B cell (primary cell): ENCODE measurements at regions of chr2 and their contacts with region 1.

Region 1: GRCh38 chr2:20015472-20016083 is 3.1 kb upstream of the MATN3 start:
- DNase-seq: peak; percentile 63
- ATAC-seq: no peak
- H3K4me3 ChIP-seq: no peak overlapping the region
- H3K4me3 Mint-ChIP-seq: no peak overlapping the region
- H3K27ac ChIP-seq: no peak overlapping the region
- H3K27ac Mint-ChIP-seq: no peak overlapping the region
- H3K4me1 ChIP-seq: peaks cover 11 to 18% of the 10 kb centered on the region in 2 donors
- H3K4me1 Mint-ChIP-seq: peaks cover 11% of the 10 kb centered on the region
- H3K27me3 ChIP-seq: peaks cover 0 to 33% (median 22%) of the 10 kb centered on the region in 4 experiments
- H3K27me3 Mint-ChIP-seq: peaks cover 42% of the 10 kb centered on the region
- CTCF ChIP-seq: peak; percentile 85

Region 2: DNA sequence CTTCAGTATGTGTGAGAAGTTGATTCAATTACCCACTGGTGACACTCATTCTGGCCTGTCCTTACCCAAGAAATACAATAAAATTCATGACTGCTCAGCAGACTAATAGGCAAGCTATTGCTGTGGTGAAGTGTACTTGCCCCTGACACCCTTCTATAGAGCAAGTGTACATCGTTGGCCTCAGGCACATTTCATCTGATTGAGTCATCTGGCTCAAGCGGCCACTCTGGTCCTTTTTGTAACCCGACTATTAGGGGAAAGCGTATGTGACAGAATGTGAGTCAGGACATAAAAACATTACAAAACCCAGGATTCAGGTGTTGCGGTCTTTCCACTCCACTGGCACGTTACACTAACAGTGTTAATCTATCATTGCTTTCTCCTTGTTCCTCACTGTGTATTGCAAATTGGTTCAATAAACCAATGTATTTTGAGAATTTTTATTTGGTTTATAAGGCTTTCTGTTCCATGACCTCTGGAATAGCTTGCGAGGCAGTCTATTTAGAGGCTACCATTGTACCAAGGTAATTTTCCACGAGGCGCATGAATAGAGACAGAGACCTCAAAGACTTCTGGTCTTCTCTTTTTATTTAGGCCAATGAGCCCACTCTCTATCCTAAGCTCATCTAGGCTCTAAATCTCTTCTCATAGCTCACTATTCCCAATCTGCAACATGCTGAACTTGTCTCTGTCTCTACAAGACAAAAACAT is 103.6 kb before region 1 on chr2:
- CTCF ChIA-PET with region 1: no interaction called
- POLR2A ChIA-PET with region 1: no interaction called
- intact Hi-C with region 1: no loop called
- DNase-seq: no peak
- ATAC-seq: no peak
- H3K4me3 ChIP-seq: no peak overlapping the region
- H3K4me3 Mint-ChIP-seq: no peak overlapping the region
- H3K27ac ChIP-seq: no peak overlapping the region
- H3K27ac Mint-ChIP-seq: no peak overlapping the region
- H3K4me1 ChIP-seq: no peaks in the 10 kb centered on the region
- H3K4me1 Mint-ChIP-seq: no peaks in the 10 kb centered on the region
- H3K27me3 ChIP-seq: no peaks in the 10 kb centered on the region
- H3K27me3 Mint-ChIP-seq: no peaks in the 10 kb centered on the region
- CTCF ChIP-seq: no peak

Region 3: DNA sequence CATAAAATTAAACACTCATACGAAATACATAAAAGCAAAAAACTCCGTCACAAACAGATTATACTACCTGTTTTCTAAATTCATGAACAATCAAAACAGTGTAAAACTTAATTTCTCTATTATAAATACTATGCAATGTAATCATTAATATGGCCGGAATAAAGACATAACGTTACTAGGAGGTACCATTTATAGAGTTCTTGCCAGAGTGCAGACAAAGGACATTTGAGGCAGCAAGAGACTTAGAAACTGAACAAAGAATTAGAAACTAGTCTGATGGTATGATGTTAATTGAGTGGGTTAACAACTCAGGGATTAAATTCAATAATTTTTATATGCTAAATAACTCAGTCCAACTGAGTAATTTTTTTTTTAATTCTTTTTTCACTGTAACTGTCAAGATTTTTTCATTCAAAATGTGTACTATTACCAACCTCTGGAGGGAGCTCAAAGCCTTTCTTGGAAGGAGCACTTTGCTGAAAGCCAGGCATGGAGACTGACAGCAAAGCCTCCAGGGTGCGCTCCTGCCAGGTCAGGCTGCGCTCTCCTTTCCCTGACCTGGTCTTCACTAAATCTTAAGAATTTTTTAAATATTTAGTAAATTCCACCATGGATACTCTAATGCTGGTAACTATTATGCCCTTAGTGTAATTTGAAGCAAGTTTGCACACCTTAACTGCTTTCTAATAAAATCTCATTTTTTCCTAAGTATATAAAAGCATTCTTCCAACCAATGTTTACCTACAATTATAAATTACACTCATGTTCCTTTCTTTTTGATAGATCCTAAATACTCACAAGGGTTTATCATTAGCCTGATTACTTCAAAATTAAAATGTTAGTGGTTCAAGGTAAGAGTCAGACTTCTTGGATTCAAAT is 59.8 kb before region 1 on chr2:
- CTCF ChIA-PET with region 1: interaction called, 15 read pairs
- POLR2A ChIA-PET with region 1: no interaction called
- intact Hi-C with region 1: no loop called
- DNase-seq: peak; percentile 68
- ATAC-seq: peak; percentile 82
- H3K4me3 ChIP-seq: no peak overlapping the region
- H3K4me3 Mint-ChIP-seq: no peak overlapping the region
- H3K27ac ChIP-seq: no peak overlapping the region
- H3K27ac Mint-ChIP-seq: no peak overlapping the region
- H3K4me1 ChIP-seq: no peaks in the 10 kb centered on the region
- H3K4me1 Mint-ChIP-seq: no peaks in the 10 kb centered on the region
- H3K27me3 ChIP-seq: no peaks in the 10 kb centered on the region
- H3K27me3 Mint-ChIP-seq: no peaks in the 10 kb centered on the region
- CTCF ChIP-seq: peak; percentile 85

Region 4: DNA sequence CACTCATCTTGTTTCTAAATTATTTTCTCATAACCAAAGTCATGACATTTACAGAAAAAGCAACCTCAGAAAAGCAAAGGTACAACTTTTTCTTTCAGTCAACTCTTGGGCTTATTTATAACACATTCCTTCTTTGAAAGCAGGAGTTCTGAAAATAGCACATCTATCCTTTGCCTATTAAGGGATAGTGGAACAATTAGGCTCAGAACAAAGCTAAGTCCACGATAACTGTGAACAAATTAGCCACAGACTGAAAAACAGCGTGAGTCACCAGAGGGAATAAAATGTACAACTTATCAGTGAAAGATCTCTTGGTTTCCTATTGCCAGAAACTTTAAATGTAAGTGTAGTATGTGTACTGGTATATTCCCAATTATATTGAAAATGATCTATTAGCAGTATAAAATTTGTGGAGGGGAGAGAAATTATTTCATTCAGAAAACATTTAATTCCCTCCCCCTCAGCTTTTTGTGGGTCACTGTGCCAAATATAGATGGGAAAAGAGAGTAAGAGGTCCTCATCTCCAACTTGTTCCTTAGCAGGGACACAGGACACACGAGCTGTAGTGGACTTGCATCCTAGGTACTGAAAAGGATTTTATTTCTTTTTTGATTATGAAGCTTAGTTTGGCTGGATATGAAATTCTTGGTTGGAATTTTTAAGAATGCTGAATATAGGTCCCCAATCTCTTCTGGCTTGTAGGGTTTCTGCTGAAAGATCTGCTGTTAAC is 12.3 kb after region 1 on chr2:
- CTCF ChIA-PET with region 1: interaction called, 12 read pairs
- POLR2A ChIA-PET with region 1: no interaction called
- intact Hi-C with region 1: no loop called
- DNase-seq: no peak
- ATAC-seq: no peak
- H3K4me3 ChIP-seq: no peak overlapping the region
- H3K4me3 Mint-ChIP-seq: no peak overlapping the region
- H3K27ac ChIP-seq: no peak overlapping the region
- H3K27ac Mint-ChIP-seq: no peak overlapping the region
- H3K4me1 ChIP-seq: no peaks in the 10 kb centered on the region
- H3K4me1 Mint-ChIP-seq: no peaks in the 10 kb centered on the region
- H3K27me3 ChIP-seq: no peaks in the 10 kb centered on the region
- H3K27me3 Mint-ChIP-seq: no peaks in the 10 kb centered on the region
- CTCF ChIP-seq: no peak

Region 5: GRCh38 chr2:20051532-20052228 is 36.1 kb after region 1 on chr2 and contains the start of gene LAPTM4A:
- CTCF ChIA-PET with region 1: interaction called, 18 read pairs
- POLR2A ChIA-PET with region 1: no interaction called
- intact Hi-C with region 1: loop called (anchors 1 kb)
- DNase-seq: peak; percentile 99
- ATAC-seq: peak; percentile 89
- H3K4me3 ChIP-seq: peak within 1 kb of the TSS; percentile 49 to 99 (median 85)
- H3K4me3 Mint-ChIP-seq: no peak within 1 kb of the TSS
- H3K27ac ChIP-seq: peak within 1 kb of the TSS; percentile 88 to 98
- H3K27ac Mint-ChIP-seq: no peak within 1 kb of the TSS
- H3K4me1 ChIP-seq: peaks cover 25 to 28% of the 10 kb centered on the region in 2 donors
- H3K4me1 Mint-ChIP-seq: peaks cover 30% of the 10 kb centered on the region
- H3K27me3 ChIP-seq: peaks cover 0 to 15% (median 7%) of the 10 kb centered on the region in 4 experiments
- H3K27me3 Mint-ChIP-seq: peaks cover 14% of the 10 kb centered on the region
- CTCF ChIP-seq: no peak
- total RNA-seq, gene LAPTM4A: 70.1 and 74.4 TPM in 2 replicates

Region 6: DNA sequence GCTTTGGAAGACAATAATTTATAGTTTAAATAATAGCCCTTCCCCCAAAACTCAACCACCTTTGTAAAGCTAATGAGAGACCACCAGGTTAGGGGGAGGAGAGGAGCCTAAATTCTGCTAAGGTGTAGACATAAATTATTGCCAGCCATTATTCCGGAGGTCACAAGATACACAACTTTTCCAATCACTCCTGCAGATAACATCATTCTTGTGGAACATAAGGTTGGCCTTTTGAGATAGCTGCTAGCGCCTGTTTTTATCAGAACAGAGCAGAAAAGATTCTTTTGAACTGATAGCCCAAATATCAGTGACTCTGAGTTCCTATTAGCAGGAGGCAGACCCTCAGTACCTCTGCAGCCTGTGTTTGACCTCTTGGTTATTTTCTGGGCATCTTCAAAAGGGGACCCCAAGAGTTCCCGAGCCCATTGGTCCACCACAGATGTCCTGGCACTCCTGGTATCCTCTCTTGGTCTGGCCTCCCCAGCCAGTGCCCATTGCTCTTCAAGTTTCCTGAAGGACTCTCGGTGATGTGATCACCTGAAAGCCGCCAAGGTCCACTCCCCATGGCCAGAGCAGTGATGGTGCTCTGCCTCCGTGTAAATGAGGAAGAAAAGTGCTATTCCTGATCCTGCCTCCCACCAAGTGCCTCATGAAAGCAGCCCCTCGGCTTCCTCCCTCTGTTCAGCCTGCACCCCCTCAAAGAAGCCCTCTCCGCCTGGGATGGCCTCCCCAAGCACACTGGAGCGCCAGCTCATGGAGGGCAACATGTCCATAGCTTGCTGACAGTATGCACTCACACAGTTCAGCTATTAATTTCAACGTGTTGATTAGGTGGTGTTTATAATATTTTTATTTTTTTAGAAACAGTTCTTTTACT is 74.4 kb after region 1 on chr2:
- CTCF ChIA-PET with region 1: interaction called, 66 read pairs
- POLR2A ChIA-PET with region 1: no interaction called
- intact Hi-C with region 1: no loop called
- DNase-seq: no peak
- ATAC-seq: no peak
- H3K4me3 ChIP-seq: no peak overlapping the region
- H3K4me3 Mint-ChIP-seq: no peak overlapping the region
- H3K27ac ChIP-seq: no peak overlapping the region
- H3K27ac Mint-ChIP-seq: no peak overlapping the region
- H3K4me1 ChIP-seq: no peaks in the 10 kb centered on the region
- H3K4me1 Mint-ChIP-seq: no peaks in the 10 kb centered on the region
- H3K27me3 ChIP-seq: peaks cover 0 to 2% (median 0%) of the 10 kb centered on the region in 4 experiments
- H3K27me3 Mint-ChIP-seq: peaks cover 33% of the 10 kb centered on the region
- CTCF ChIP-seq: no peak

Region 7: DNA sequence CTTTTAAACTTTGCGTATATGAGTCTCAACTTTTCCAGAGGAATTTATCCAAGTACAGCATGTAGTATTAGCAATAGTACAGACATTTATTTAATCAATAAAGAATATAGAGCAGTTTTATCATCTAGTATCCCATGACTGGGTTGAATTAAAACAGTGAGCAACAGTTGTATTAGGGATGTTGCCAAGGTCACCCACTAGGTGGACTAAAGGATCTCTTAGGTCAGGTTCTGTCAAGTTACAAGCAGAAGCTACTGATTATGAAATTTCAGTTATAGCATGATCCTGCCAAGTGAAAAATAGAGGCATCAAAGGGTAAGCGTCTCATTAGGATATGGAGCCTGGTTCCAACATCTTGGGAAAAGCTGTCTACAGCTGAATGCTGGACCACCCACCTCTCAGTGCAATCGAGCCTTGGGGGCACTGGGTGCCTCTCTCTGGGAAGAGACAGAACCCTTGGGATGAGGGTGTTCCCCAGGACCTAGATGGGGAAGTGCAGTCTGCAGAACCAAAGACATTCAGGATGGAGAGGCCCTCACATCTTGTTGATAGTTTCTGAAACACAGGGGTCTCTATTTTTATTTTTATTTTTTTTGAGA is 88.0 kb after region 1 on chr2:
- CTCF ChIA-PET with region 1: interaction called, 73 read pairs
- POLR2A ChIA-PET with region 1: no interaction called
- intact Hi-C with region 1: no loop called
- DNase-seq: no peak
- ATAC-seq: no peak
- H3K4me3 ChIP-seq: no peak overlapping the region
- H3K4me3 Mint-ChIP-seq: no peak overlapping the region
- H3K27ac ChIP-seq: no peak overlapping the region
- H3K27ac Mint-ChIP-seq: no peak overlapping the region
- H3K4me1 ChIP-seq: peaks cover 0 to 5% of the 10 kb centered on the region in 2 donors
- H3K4me1 Mint-ChIP-seq: no peaks in the 10 kb centered on the region
- H3K27me3 ChIP-seq: peaks cover 0 to 13% (median 2%) of the 10 kb centered on the region in 4 experiments
- H3K27me3 Mint-ChIP-seq: peaks cover 47% of the 10 kb centered on the region
- CTCF ChIP-seq: no peak

Region 8: GRCh38 chr2:20157193-20157891 is 141.8 kb after region 1 on chr2:
- CTCF ChIA-PET with region 1: no interaction called
- POLR2A ChIA-PET with region 1: no interaction called
- intact Hi-C with region 1: no loop called
- DNase-seq: no peak
- ATAC-seq: no peak
- H3K4me3 ChIP-seq: no peak overlapping the region
- H3K4me3 Mint-ChIP-seq: no peak overlapping the region
- H3K27ac ChIP-seq: no peak overlapping the region
- H3K27ac Mint-ChIP-seq: no peak overlapping the region
- H3K4me1 ChIP-seq: no peaks in the 10 kb centered on the region
- H3K4me1 Mint-ChIP-seq: no peaks in the 10 kb centered on the region
- H3K27me3 ChIP-seq: peaks cover 0 to 9% (median 3%) of the 10 kb centered on the region in 4 experiments
- H3K27me3 Mint-ChIP-seq: peaks cover 24% of the 10 kb centered on the region
- CTCF ChIP-seq: no peak